ENCODE measurements at regions of chr5 and their contacts with region 1.

Region 1: GRCh38 chr5:36875790-36876388 is 680 bp upstream of the NIPBL start:
- DNase-seq: peak; percentile 53 to 90 (median 70)
- ATAC-seq: peak; percentile 48
- H3K4me3 ChIP-seq: peak overlapping the region; percentile 94
- H3K4me3 Mint-ChIP-seq: peak overlapping the region; percentile 91
- H3K27ac ChIP-seq: peak overlapping the region; percentile 83 to 96
- H3K27ac Mint-ChIP-seq: peak overlapping the region; percentile 91
- H3K4me1 ChIP-seq: peaks cover 15% of the 10 kb centered on the region
- H3K4me1 Mint-ChIP-seq: peaks cover 57% of the 10 kb centered on the region
- H3K27me3 ChIP-seq: no peaks in the 10 kb centered on the region
- H3K27me3 Mint-ChIP-seq: no peaks in the 10 kb centered on the region
- CTCF ChIP-seq: peak; percentile 66

Region 2: DNA sequence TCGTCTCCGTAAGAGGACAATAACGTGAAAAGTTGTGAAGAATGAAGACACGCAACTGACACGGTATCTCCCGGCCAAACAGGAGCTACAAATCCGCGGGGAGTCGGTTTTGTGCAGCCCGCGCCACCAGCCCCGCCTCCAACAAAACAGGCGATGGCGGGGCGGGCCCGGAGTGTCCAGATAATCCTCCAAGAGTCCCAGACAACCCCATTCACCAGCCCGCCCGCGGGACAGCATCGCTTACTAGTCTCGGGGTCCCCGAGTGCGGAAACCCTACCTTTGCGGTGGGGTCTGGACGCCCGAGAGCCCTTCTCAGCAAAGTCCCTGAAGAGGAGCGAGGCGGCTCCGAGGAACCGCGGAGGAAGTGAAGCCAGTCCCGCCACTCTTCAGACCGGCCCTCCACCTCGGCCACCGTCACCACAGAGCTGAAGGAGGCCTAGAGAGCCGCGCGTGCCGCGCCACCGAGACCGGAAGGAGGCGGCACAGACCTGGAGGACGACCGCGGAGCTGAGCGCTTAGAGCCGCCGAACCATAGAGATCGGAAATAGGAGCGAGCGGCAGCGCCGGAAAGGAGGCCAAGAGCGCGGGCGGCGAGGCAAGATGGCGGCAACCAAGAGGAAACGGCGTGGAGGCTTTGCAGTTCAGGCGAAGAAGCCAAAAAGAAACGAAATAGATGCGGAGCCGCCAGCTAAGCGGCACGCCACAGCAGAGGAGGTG is 1960.6 kb before region 1 on chr5 and contains the starts of genes BRIX1 and RAD1:
- CTCF ChIA-PET with region 1: no interaction called
- POLR2A ChIA-PET with region 1: interaction called, 3 read pairs
- intact Hi-C with region 1: loop called (anchors 10 kb)
- DNase-seq: peak; percentile 87 to 97 (median 90)
- ATAC-seq: peak; percentile 96
- H3K4me3 ChIP-seq: peak within 1 kb of the TSS; percentile 91
- H3K4me3 Mint-ChIP-seq: peak within 1 kb of the TSS; percentile 77
- H3K27ac ChIP-seq: peak within 1 kb of the TSS; percentile 84 to 88
- H3K27ac Mint-ChIP-seq: no peak within 1 kb of the TSS
- H3K4me1 ChIP-seq: peaks cover 27% of the 10 kb centered on the region
- H3K4me1 Mint-ChIP-seq: peaks cover 35% of the 10 kb centered on the region
- H3K27me3 ChIP-seq: no peaks in the 10 kb centered on the region
- H3K27me3 Mint-ChIP-seq: no peaks in the 10 kb centered on the region
- CTCF ChIP-seq: no peak
- total RNA-seq, gene BRIX1: 29.7 to 30.2 TPM
- total RNA-seq, gene RAD1: 26.7 to 29.2 TPM

Region 3: GRCh38 chr5:36151434-36152323 is 724.2 kb before region 1 on chr5 and contains the starts of genes LMBRD2 and SKP2:
- CTCF ChIA-PET with region 1: no interaction called
- POLR2A ChIA-PET with region 1: interaction called, 19 read pairs
- intact Hi-C with region 1: loop called in 1 of 2 experiments (anchors 5 kb)
- DNase-seq: peak; percentile 90 to 99 (median 95)
- ATAC-seq: peak; percentile 96
- H3K4me3 ChIP-seq: peak within 1 kb of the TSS; percentile 92
- H3K4me3 Mint-ChIP-seq: peak within 1 kb of the TSS; percentile 95
- H3K27ac ChIP-seq: peak within 1 kb of the TSS; percentile 77 to 82
- H3K27ac Mint-ChIP-seq: peak within 1 kb of the TSS; percentile 86
- H3K4me1 ChIP-seq: peaks cover 30% of the 10 kb centered on the region
- H3K4me1 Mint-ChIP-seq: peaks cover 76% of the 10 kb centered on the region
- H3K27me3 ChIP-seq: no peaks in the 10 kb centered on the region
- H3K27me3 Mint-ChIP-seq: no peaks in the 10 kb centered on the region
- CTCF ChIP-seq: no peak
- total RNA-seq, gene LMBRD2: 4.1 to 4.2 TPM
- total RNA-seq, gene SKP2: 6.3 to 7.2 TPM

Region 4: GRCh38 chr5:36728697-36729543 is 147.0 kb before region 1 on chr5:
- CTCF ChIA-PET with region 1: interaction called, 6 read pairs
- POLR2A ChIA-PET with region 1: interaction called, 13 read pairs
- intact Hi-C with region 1: loop called (anchors 2 kb)
- DNase-seq: peak in 4 of 14 experiments; percentile 34 to 77 (median 68)
- ATAC-seq: peak; percentile 62
- H3K4me3 ChIP-seq: no peak overlapping the region
- H3K4me3 Mint-ChIP-seq: no peak overlapping the region
- H3K27ac ChIP-seq: no peak overlapping the region
- H3K27ac Mint-ChIP-seq: no peak overlapping the region
- H3K4me1 ChIP-seq: peaks cover 11% of the 10 kb centered on the region
- H3K4me1 Mint-ChIP-seq: peaks cover 13% of the 10 kb centered on the region
- H3K27me3 ChIP-seq: no peaks in the 10 kb centered on the region
- H3K27me3 Mint-ChIP-seq: peaks cover 4% of the 10 kb centered on the region
- CTCF ChIP-seq: peak; percentile 83

Region 5: DNA sequence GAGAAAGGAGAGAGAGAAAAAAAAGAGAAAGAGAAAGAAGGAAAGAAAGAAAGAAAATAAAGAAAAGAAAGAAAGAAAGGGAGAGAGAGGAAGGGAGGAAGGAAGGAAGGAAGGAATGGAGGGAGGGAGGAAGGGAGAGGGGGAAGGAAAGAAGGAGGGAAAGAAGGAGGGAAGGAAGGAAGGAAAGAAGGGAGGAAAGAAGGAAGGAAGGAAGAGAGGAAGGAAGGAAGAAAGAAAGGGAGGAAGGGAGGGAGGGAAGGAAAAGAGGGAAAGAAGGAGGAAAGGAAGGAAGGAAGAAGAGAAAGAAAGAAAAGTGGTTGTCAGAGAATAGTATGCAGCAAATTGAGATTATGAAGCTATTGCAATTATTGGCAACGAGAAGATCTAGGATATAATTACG is 49.2 kb before region 1 on chr5:
- CTCF ChIA-PET with region 1: no interaction called
- POLR2A ChIA-PET with region 1: no interaction called
- intact Hi-C with region 1: no loop called
- DNase-seq: no peak
- ATAC-seq: no peak
- H3K4me3 ChIP-seq: no peak overlapping the region
- H3K4me3 Mint-ChIP-seq: no peak overlapping the region
- H3K27ac ChIP-seq: no peak overlapping the region
- H3K27ac Mint-ChIP-seq: no peak overlapping the region
- H3K4me1 ChIP-seq: no peaks in the 10 kb centered on the region
- H3K4me1 Mint-ChIP-seq: no peaks in the 10 kb centered on the region
- H3K27me3 ChIP-seq: peaks cover 5 to 6% of the 10 kb centered on the region in 2 experiments
- H3K27me3 Mint-ChIP-seq: peaks cover 39% of the 10 kb centered on the region
- CTCF ChIP-seq: no peak

Region 6: GRCh38 chr5:36894954-36895353 is 19.1 kb after region 1 on chr5:
- CTCF ChIA-PET with region 1: interaction called, 4 read pairs
- POLR2A ChIA-PET with region 1: interaction called, 11 read pairs
- intact Hi-C with region 1: no loop called
- DNase-seq: no peak
- ATAC-seq: no peak
- H3K4me3 ChIP-seq: no peak overlapping the region
- H3K4me3 Mint-ChIP-seq: peak overlapping the region; percentile 1
- H3K27ac ChIP-seq: no peak overlapping the region
- H3K27ac Mint-ChIP-seq: no peak overlapping the region
- H3K4me1 ChIP-seq: peaks cover 10% of the 10 kb centered on the region
- H3K4me1 Mint-ChIP-seq: peaks cover 70% of the 10 kb centered on the region
- H3K27me3 ChIP-seq: no peaks in the 10 kb centered on the region
- H3K27me3 Mint-ChIP-seq: no peaks in the 10 kb centered on the region
- CTCF ChIP-seq: no peak

Region 7: DNA sequence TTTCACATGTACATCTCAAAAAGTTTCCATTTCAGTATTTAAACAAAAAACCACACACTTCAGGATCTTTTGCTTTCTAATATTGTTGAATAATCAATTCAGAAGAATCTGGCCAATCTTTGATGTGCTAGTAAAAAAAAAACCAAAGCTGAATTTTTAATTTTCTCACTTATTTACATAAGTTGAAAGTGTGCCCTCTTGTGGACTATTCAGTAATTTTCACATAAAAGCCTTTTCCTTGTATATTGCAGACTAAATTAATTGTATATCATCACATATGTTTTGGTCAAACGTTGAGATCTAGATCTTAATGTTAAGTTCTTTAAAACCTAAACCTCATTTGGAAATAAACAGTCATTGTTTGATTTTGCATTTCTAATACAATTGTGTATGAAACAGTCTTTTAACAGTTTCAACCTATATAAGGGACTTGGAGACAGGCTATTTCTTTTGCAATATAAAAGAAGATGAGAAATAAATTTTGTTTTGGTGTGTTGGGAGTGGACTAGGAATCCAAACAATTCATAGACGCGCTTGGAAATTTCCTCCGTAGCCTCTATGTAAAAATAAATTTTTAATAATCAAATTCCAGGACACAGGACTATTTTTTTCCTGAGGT is 68.8 kb after region 1 on chr5:
- CTCF ChIA-PET with region 1: interaction called, 7 read pairs
- POLR2A ChIA-PET with region 1: interaction called, 7 read pairs
- intact Hi-C with region 1: loop called (anchors 2 kb)
- DNase-seq: peak in 3 of 14 experiments; percentile 58 to 75 (median 75)
- ATAC-seq: no peak
- H3K4me3 ChIP-seq: no peak overlapping the region
- H3K4me3 Mint-ChIP-seq: no peak overlapping the region
- H3K27ac ChIP-seq: no peak overlapping the region
- H3K27ac Mint-ChIP-seq: peak overlapping the region; percentile 7
- H3K4me1 ChIP-seq: no peaks in the 10 kb centered on the region
- H3K4me1 Mint-ChIP-seq: peaks cover 75% of the 10 kb centered on the region
- H3K27me3 ChIP-seq: no peaks in the 10 kb centered on the region
- H3K27me3 Mint-ChIP-seq: no peaks in the 10 kb centered on the region
- CTCF ChIP-seq: peak; percentile 79

Region 8: DNA sequence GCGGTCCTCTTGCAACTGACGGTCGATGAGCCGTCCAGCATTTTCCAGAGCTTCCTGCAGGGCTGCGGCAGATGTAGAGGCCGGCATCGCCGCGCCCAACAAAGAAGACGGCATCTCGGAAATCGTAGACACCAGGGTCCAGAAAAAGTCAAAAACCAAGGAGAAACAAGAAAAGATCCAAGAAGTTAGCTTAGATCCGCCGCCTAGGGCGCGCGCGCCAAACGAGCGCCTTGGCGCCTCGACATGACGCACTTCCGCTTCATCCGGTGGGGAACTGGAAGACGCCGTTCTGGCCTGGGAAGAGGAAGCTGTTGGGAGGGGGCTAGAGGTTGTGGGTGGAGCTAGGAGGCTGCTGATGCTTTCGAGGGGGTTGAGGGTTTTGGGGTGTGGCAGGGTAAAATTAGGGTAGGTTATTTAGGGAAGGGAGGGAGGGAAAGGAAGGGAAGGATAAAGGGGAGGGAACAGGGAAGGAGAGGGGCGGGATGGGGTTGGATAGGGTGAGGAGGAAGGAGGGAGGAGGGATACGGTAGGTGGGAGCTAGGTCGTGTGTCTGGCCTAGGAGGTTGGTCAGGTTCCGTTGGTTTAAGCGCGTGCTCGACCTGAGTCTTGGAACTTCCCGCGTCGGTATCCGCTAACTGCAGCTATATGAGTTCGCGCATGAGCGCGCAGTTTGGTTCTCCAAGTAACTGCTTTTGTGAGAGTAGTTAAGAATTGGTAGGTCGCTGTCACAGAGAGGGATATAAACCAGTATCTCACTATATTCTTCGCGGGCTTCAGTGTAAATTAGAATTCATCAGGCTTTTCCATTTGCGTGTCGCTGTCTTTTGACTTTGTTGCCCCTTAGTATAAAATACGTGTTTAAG is 495.2 kb after region 1 on chr5 and contains the start of gene NUP155:
- CTCF ChIA-PET with region 1: no interaction called
- POLR2A ChIA-PET with region 1: interaction called, 17 read pairs
- intact Hi-C with region 1: loop called (anchors 5 kb)
- DNase-seq: peak; percentile 75 to 96 (median 85)
- ATAC-seq: peak; percentile 93
- H3K4me3 ChIP-seq: peak within 1 kb of the TSS; percentile 95
- H3K4me3 Mint-ChIP-seq: peak within 1 kb of the TSS; percentile 97
- H3K27ac ChIP-seq: peak within 1 kb of the TSS; percentile 86
- H3K27ac Mint-ChIP-seq: peak within 1 kb of the TSS; percentile 96
- H3K4me1 ChIP-seq: peaks cover 27% of the 10 kb centered on the region
- H3K4me1 Mint-ChIP-seq: peaks cover 36% of the 10 kb centered on the region
- H3K27me3 ChIP-seq: no peaks in the 10 kb centered on the region
- H3K27me3 Mint-ChIP-seq: no peaks in the 10 kb centered on the region
- CTCF ChIP-seq: no peak
- total RNA-seq, gene NUP155: 21.6 to 26.0 TPM